CD8-positive, alpha-beta T cell (primary cell): ENCODE measurements at regions of chr19 and their contacts with region 1.

Region 1: GRCh38 chr19:2096480-2097329 is at the start of gene IZUMO4:
- DNase-seq: peak; percentile 98 to 100 (median 100)
- ATAC-seq: peak; percentile 78
- H3K4me3 ChIP-seq: peak within 1 kb of the TSS; percentile 82 to 88
- H3K4me3 Mint-ChIP-seq: peak within 1 kb of the TSS; percentile 92
- H3K27ac ChIP-seq: peak within 1 kb of the TSS; percentile 80 to 87
- H3K27ac Mint-ChIP-seq: peak within 1 kb of the TSS; percentile 93
- H3K4me1 ChIP-seq: peaks cover 46% of the 10 kb centered on the region
- H3K4me1 Mint-ChIP-seq: peaks cover 31% of the 10 kb centered on the region
- H3K27me3 ChIP-seq: no peaks in the 10 kb centered on the region
- H3K27me3 Mint-ChIP-seq: no peaks in the 10 kb centered on the region
- CTCF ChIP-seq: peak; percentile 49
- total RNA-seq, gene IZUMO4: 11.9 to 15.3 TPM

Region 2: GRCh38 chr19:1490311-1491113 is 606.2 kb before region 1 on chr19 and contains the start of gene PCSK4:
- CTCF ChIA-PET with region 1: no interaction called
- POLR2A ChIA-PET with region 1: no interaction called
- intact Hi-C with region 1: loop called in 1 of 2 experiments (anchors 10 kb)
- DNase-seq: peak; percentile 95 to 99 (median 97)
- ATAC-seq: peak; percentile 88
- H3K4me3 ChIP-seq: peak within 1 kb of the TSS; percentile 59 to 71
- H3K4me3 Mint-ChIP-seq: peak within 1 kb of the TSS; percentile 90
- H3K27ac ChIP-seq: peak within 1 kb of the TSS; percentile 35 to 57
- H3K27ac Mint-ChIP-seq: peak within 1 kb of the TSS; percentile 90
- H3K4me1 ChIP-seq: peaks cover 15% of the 10 kb centered on the region
- H3K4me1 Mint-ChIP-seq: peaks cover 16% of the 10 kb centered on the region
- H3K27me3 ChIP-seq: no peaks in the 10 kb centered on the region
- H3K27me3 Mint-ChIP-seq: no peaks in the 10 kb centered on the region
- CTCF ChIP-seq: no peak
- total RNA-seq, gene PCSK4: 5.4 to 6.1 TPM

Region 3: DNA sequence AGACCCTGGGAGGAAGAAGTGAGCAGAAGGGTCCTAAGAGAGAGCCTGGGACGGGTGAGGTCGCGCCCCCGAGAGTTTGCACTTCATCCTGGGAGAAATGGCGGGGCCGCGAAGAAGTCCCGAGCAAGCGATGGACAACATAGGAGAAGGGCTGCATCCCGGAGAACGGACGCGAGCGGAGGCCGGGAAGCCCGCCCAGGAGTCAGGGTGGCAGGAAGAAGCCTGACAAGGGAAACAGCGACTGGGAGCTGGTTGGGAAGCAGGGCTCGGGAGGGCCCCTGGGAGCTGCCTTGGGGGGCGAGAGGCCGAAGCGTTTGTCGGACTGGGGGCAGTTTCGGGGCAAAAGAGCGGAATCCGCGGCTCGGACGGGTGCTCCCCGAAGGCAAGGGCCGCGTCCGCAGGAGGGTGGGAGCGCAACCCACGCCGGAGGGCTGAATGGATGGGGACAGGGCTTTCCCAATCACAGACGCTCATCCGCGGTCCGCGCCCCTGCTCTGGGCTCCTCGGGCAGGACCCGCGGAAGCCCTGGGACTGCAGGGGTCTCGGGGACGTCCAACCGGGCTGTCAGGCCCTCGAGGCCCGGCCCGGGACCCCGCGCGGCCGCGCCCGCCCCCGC is 211.9 kb before region 1 on chr19:
- CTCF ChIA-PET with region 1: no interaction called
- POLR2A ChIA-PET with region 1: no interaction called
- intact Hi-C with region 1: loop called in 1 of 2 experiments (anchors 1 kb)
- DNase-seq: peak in 3 of 9 experiments; percentile 41 to 51 (median 48)
- ATAC-seq: no peak
- H3K4me3 ChIP-seq: peak overlapping the region; percentile 77 to 100
- H3K4me3 Mint-ChIP-seq: peak overlapping the region; percentile 100
- H3K27ac ChIP-seq: peak overlapping the region; percentile 92
- H3K27ac Mint-ChIP-seq: peak overlapping the region; percentile 99
- H3K4me1 ChIP-seq: peaks cover 40% of the 10 kb centered on the region
- H3K4me1 Mint-ChIP-seq: peaks cover 38% of the 10 kb centered on the region
- H3K27me3 ChIP-seq: no peaks in the 10 kb centered on the region
- H3K27me3 Mint-ChIP-seq: no peaks in the 10 kb centered on the region
- CTCF ChIP-seq: no peak

Region 4: DNA sequence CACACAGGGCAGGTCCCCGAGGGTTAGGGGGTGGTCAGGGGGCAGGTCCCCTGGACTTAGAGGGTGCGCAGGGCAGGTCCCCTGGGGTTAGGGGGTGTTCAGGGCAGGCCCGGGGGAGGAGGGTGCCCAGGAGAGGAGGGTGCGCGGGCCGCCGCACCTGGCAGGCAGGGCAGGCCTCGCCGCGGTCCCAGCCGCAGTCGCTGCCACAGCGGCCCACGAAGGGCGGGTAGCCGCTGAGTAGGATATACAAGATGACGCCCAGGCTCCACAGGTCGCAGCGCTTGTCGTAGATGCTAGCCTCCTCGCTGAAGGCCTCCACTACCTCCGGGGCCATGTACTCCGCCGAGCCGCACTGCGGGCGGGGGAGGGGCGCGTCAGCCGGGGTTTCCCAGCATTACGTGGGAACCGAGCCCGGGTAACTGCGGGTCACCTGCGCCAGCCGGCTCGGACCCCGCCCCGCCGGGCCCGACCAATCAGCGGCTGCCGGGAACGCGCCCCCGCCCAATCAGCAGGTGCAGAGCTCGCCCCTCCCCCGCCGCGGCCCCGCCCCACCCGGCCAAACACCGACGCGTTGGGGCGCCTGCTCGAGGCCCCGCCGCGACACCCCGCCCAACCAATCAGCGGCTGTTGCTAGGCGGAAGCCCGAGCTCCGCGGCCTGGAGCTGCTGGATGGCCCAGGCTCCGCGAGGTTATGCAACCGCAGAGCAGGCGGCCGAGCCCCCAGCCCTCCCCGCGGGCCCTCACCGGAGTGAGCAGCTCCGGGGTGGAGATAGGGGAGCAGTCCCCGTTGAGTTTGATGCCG is 54.8 kb before region 1 on chr19:
- CTCF ChIA-PET with region 1: interaction called, 4 read pairs
- POLR2A ChIA-PET with region 1: no interaction called
- intact Hi-C with region 1: loop called (anchors 2 kb)
- DNase-seq: peak; percentile 99 to 100 (median 100)
- ATAC-seq: peak; percentile 85
- H3K4me3 ChIP-seq: peak overlapping the region; percentile 28 to 62
- H3K4me3 Mint-ChIP-seq: peak overlapping the region; percentile 65
- H3K27ac ChIP-seq: peak overlapping the region; percentile 96 to 100
- H3K27ac Mint-ChIP-seq: peak overlapping the region; percentile 93
- H3K4me1 ChIP-seq: peaks cover 54% of the 10 kb centered on the region
- H3K4me1 Mint-ChIP-seq: peaks cover 28% of the 10 kb centered on the region
- H3K27me3 ChIP-seq: no peaks in the 10 kb centered on the region
- H3K27me3 Mint-ChIP-seq: no peaks in the 10 kb centered on the region
- CTCF ChIP-seq: no peak

Region 5: DNA sequence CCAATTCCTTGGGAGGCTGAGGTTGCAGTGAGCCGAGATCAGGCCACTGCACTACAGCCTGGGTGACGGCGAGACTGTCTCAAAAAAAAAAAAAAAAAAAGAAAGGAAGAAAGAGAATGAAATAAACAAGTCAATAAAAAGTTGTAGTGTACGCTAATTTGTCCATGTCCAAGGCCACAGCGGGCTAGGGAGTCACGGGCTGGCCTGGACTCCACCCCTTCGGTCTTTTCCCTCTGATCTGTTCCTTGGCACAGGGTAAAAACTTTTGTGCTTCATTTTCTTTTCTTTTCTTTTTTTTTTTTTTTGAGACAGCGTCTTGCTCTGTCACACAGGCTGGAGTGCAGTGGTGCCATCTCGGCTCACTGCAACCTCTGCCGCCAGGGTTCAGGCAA is 26.3 kb before region 1 on chr19:
- CTCF ChIA-PET with region 1: interaction called, 19 read pairs
- POLR2A ChIA-PET with region 1: interaction called, 5 read pairs
- intact Hi-C with region 1: no loop called
- DNase-seq: no peak
- ATAC-seq: peak; percentile 7
- H3K4me3 ChIP-seq: no peak overlapping the region
- H3K4me3 Mint-ChIP-seq: no peak overlapping the region
- H3K27ac ChIP-seq: no peak overlapping the region
- H3K27ac Mint-ChIP-seq: peak overlapping the region; percentile 37
- H3K4me1 ChIP-seq: peaks cover 11% of the 10 kb centered on the region
- H3K4me1 Mint-ChIP-seq: peaks cover 24% of the 10 kb centered on the region
- H3K27me3 ChIP-seq: no peaks in the 10 kb centered on the region
- H3K27me3 Mint-ChIP-seq: no peaks in the 10 kb centered on the region
- CTCF ChIP-seq: no peak

Region 6: GRCh38 chr19:2151339-2152229 is 54.9 kb after region 1 on chr19 and contains the start of gene AP3D1:
- CTCF ChIA-PET with region 1: no interaction called
- POLR2A ChIA-PET with region 1: interaction called, 4 read pairs
- intact Hi-C with region 1: loop called (anchors 1 kb)
- DNase-seq: peak; percentile 100
- ATAC-seq: peak; percentile 91
- H3K4me3 ChIP-seq: peak within 1 kb of the TSS; percentile 60 to 87
- H3K4me3 Mint-ChIP-seq: peak within 1 kb of the TSS; percentile 85
- H3K27ac ChIP-seq: peak within 1 kb of the TSS; percentile 78 to 79
- H3K27ac Mint-ChIP-seq: peak within 1 kb of the TSS; percentile 90
- H3K4me1 ChIP-seq: peaks cover 36% of the 10 kb centered on the region
- H3K4me1 Mint-ChIP-seq: peaks cover 35% of the 10 kb centered on the region
- H3K27me3 ChIP-seq: no peaks in the 10 kb centered on the region
- H3K27me3 Mint-ChIP-seq: no peaks in the 10 kb centered on the region
- CTCF ChIP-seq: no peak
- total RNA-seq, gene AP3D1: 39.4 to 42.5 TPM

Region 7: GRCh38 chr19:3094601-3095437 is 998.1 kb after region 1 on chr19:
- CTCF ChIA-PET with region 1: no interaction called
- POLR2A ChIA-PET with region 1: no interaction called
- intact Hi-C with region 1: no loop called
- DNase-seq: peak in 4 of 9 experiments; percentile 43 to 59 (median 58)
- ATAC-seq: peak; percentile 6
- H3K4me3 ChIP-seq: peak overlapping the region; percentile 34 to 62
- H3K4me3 Mint-ChIP-seq: peak overlapping the region; percentile 77
- H3K27ac ChIP-seq: no peak overlapping the region
- H3K27ac Mint-ChIP-seq: peak overlapping the region; percentile 60
- H3K4me1 ChIP-seq: peaks cover 42% of the 10 kb centered on the region
- H3K4me1 Mint-ChIP-seq: peaks cover 24% of the 10 kb centered on the region
- H3K27me3 ChIP-seq: peaks cover 0 to 20% of the 10 kb centered on the region in 2 experiments
- H3K27me3 Mint-ChIP-seq: peaks cover 6% of the 10 kb centered on the region
- CTCF ChIP-seq: no peak